ENCODE measurements at regions of chr4 and their contacts with region 1.

Region 1: GRCh38 chr4:56977321-56978012 is at the start of gene NOA1:
- DNase-seq: peak; percentile 93

Region 2: GRCh38 chr4:56844802-56845580 is 132.5 kb before region 1 on chr4:
- CTCF ChIA-PET with region 1: no interaction called
- POLR2A ChIA-PET with region 1: no interaction called
- DNase-seq: no peak

Region 3: GRCh38 chr4:56907489-56908205 is 69.8 kb before region 1 on chr4 and contains the start of gene REST:
- CTCF ChIA-PET with region 1: no interaction called
- POLR2A ChIA-PET with region 1: interaction called, 28 read pairs
- DNase-seq: peak; percentile 84

Region 4: GRCh38 chr4:56927196-56927595 is 50.3 kb before region 1 on chr4:
- CTCF ChIA-PET with region 1: no interaction called
- POLR2A ChIA-PET with region 1: interaction called, 12 read pairs
- DNase-seq: no peak

Region 5: GRCh38 chr4:56958111-56958517 is 19.4 kb before region 1 on chr4:
- CTCF ChIA-PET with region 1: interaction called, 4 read pairs
- POLR2A ChIA-PET with region 1: interaction called, 10 read pairs
- DNase-seq: peak; percentile 46

Region 6: GRCh38 chr4:56990109-56990905 is 12.8 kb after region 1 on chr4:
- CTCF ChIA-PET with region 1: interaction called, 3 read pairs
- POLR2A ChIA-PET with region 1: interaction called, 46 read pairs
- DNase-seq: no peak

Region 7: GRCh38 chr4:57426779-57427395 is 449.4 kb after region 1 on chr4:
- CTCF ChIA-PET with region 1: no interaction called
- POLR2A ChIA-PET with region 1: no interaction called
- DNase-seq: peak; percentile 75

Measured in HEK293T (cell line).